CD4-positive, alpha-beta T cell (primary cell): ENCODE measurements at regions of chr16 and their contacts with region 1.

Region 1: GRCh38 chr16:67806428-67807147 is at the starts of genes RANBP10 and TSNAXIP1:
- DNase-seq: peak; percentile 90 to 99 (median 93)
- ATAC-seq: peak; percentile 92
- H3K4me3 ChIP-seq: peak within 1 kb of the TSS; percentile 97
- H3K4me3 Mint-ChIP-seq: peak within 1 kb of the TSS; percentile 91
- H3K27ac ChIP-seq: peak within 1 kb of the TSS; percentile 69 to 75
- H3K27ac Mint-ChIP-seq: peak within 1 kb of the TSS; percentile 76
- H3K4me1 ChIP-seq: peaks cover 50% of the 10 kb centered on the region
- H3K4me1 Mint-ChIP-seq: peaks cover 43% of the 10 kb centered on the region
- H3K27me3 ChIP-seq: no peaks in the 10 kb centered on the region
- H3K27me3 Mint-ChIP-seq: no peaks in the 10 kb centered on the region
- CTCF ChIP-seq: no peak
- total RNA-seq, gene RANBP10: 12.0 to 13.6 TPM
- total RNA-seq, gene TSNAXIP1: 0.52 to 0.61 TPM

Region 2: DNA sequence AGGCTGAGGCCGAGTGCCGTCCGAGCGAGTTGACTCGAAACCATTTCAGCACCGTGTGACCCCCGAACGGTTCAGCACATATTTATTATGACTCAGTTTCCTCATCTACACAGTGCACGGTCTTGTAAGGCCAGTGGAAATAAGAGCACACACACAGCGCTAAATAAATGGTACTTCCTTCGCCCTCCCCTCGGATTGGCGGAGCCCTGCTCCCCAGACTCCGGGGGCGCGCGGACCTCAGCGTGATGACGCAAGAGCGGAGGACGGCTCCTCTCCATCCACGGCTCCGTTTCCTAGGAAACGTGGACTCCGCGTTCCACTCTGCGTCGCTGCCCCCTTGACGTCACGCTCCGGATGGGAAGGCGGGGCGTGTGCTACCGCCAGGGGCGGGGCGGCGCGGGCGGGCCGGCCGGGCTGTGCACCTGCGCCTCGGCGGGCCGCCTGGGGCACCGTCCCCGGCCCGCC is 146.0 kb before region 1 on chr16 and contains the start of gene PARD6A:
- CTCF ChIA-PET with region 1: no interaction called
- POLR2A ChIA-PET with region 1: interaction called, 3 read pairs
- intact Hi-C with region 1: loop called in 1 of 2 experiments (anchors 5 kb)
- DNase-seq: peak; percentile 86 to 99 (median 93)
- ATAC-seq: peak; percentile 76
- H3K4me3 ChIP-seq: peak within 1 kb of the TSS; percentile 95
- H3K4me3 Mint-ChIP-seq: peak within 1 kb of the TSS; percentile 95
- H3K27ac ChIP-seq: peak within 1 kb of the TSS; percentile 93 to 99
- H3K27ac Mint-ChIP-seq: peak within 1 kb of the TSS; percentile 94
- H3K4me1 ChIP-seq: peaks cover 38% of the 10 kb centered on the region
- H3K4me1 Mint-ChIP-seq: peaks cover 37% of the 10 kb centered on the region
- H3K27me3 ChIP-seq: no peaks in the 10 kb centered on the region
- H3K27me3 Mint-ChIP-seq: no peaks in the 10 kb centered on the region
- CTCF ChIP-seq: no peak
- total RNA-seq, gene PARD6A: 4.5 to 4.7 TPM

Region 3: DNA sequence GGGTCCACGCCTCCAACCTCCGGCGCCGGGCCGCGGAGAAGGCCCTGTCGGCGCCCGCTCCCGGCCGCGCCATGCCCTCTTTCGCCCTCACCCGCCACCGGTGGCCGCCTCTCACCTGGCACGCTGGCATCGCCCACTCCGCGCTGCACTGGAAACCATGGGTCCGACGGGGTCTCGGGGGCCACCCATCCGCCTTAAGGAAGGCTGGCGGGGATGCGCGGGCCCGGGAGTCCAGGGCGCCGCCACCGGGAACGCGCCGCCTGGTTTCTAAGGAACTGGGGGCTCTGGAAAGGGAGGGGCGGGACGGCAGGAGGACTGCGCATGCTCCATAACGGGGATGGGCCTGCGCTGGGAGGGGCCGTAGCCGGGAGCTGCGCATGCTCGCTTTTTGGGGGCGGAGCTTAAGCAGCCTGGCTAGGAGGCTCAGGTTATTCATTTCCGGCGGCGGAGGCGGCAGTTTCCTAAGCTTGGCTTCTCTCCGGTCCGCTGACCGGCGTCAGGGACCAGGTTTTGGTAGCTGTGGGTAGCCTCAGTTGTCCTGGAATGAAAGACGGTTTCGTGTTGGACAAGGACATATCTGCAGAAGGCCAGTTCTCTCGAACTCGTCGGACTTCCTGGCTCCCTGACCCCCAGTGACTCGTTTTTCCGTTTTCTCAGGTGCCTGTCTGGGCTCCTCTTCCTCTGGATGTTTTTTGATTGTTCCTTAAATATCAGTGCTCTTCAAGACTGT is 87.4 kb before region 1 on chr16 and contains the start of gene GFOD2:
- CTCF ChIA-PET with region 1: no interaction called
- POLR2A ChIA-PET with region 1: interaction called, 18 read pairs
- intact Hi-C with region 1: loop called (anchors 1 to 2 kb)
- DNase-seq: peak; percentile 96 to 100 (median 98)
- ATAC-seq: peak; percentile 94
- H3K4me3 ChIP-seq: peak within 1 kb of the TSS; percentile 76
- H3K4me3 Mint-ChIP-seq: peak within 1 kb of the TSS; percentile 97
- H3K27ac ChIP-seq: peak within 1 kb of the TSS; percentile 81 to 93
- H3K27ac Mint-ChIP-seq: peak within 1 kb of the TSS; percentile 93
- H3K4me1 ChIP-seq: peaks cover 26% of the 10 kb centered on the region
- H3K4me1 Mint-ChIP-seq: peaks cover 42% of the 10 kb centered on the region
- H3K27me3 ChIP-seq: no peaks in the 10 kb centered on the region
- H3K27me3 Mint-ChIP-seq: no peaks in the 10 kb centered on the region
- CTCF ChIP-seq: no peak
- total RNA-seq, gene GFOD2: 2.8 to 3.7 TPM

Region 4: GRCh38 chr16:67833418-67834241 is 27.0 kb after region 1 on chr16:
- CTCF ChIA-PET with region 1: no interaction called
- POLR2A ChIA-PET with region 1: interaction called, 13 read pairs
- intact Hi-C with region 1: loop called in 1 of 2 experiments (anchors 2 kb)
- DNase-seq: peak; percentile 87 to 95 (median 91)
- ATAC-seq: peak; percentile 99
- H3K4me3 ChIP-seq: peak overlapping the region; percentile 87
- H3K4me3 Mint-ChIP-seq: peak overlapping the region; percentile 93
- H3K27ac ChIP-seq: peak overlapping the region in 1 of 2 donors; percentile 34
- H3K27ac Mint-ChIP-seq: peak overlapping the region; percentile 72
- H3K4me1 ChIP-seq: peaks cover 20% of the 10 kb centered on the region
- H3K4me1 Mint-ChIP-seq: peaks cover 20% of the 10 kb centered on the region
- H3K27me3 ChIP-seq: no peaks in the 10 kb centered on the region
- H3K27me3 Mint-ChIP-seq: no peaks in the 10 kb centered on the region
- CTCF ChIP-seq: no peak

Region 5: DNA sequence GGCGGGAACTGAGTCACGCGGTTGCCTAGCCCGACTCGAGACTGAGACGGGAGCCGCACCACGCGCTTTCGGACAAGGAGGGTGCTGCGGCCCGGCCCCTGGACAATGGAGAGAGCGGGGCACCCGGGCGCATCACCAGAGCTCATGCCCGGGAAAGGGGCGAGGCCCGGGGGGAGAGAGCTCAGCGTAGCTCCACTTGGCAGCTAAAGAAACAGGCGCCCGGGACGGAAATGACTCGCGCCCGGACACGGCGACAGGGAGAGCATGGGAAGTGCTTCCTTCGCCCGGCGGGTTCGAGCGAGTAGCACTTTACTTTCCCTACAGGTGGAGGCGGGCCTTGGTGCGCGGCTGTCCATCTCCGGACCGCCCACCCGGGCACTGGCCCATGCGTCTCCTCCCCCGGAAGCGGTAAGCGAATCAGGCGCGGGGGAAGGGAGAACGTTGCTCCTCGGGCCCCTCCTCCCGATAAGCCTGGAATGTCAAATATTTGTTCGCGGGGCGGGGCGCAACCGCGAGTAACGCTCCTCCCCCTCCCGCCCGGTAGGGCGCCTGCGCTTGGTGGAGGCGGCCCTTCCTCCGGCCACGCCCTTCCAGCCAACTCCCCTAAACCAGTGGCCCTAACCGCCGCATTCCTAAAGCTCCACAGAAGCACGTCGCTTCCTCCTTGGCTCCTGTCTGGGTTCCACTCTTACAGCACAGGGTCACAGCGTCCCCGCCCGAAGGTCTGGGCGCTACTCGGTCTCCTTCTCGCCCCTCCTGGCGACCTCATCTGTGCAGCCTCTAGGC is 430.8 kb after region 1 on chr16:
- CTCF ChIA-PET with region 1: no interaction called
- POLR2A ChIA-PET with region 1: interaction called, 4 read pairs
- intact Hi-C with region 1: loop called in 1 of 2 experiments (anchors 5 kb)
- DNase-seq: peak; percentile 75 to 96 (median 85)
- ATAC-seq: peak; percentile 78
- H3K4me3 ChIP-seq: peak overlapping the region; percentile 66
- H3K4me3 Mint-ChIP-seq: peak overlapping the region; percentile 95
- H3K27ac ChIP-seq: no peak overlapping the region
- H3K27ac Mint-ChIP-seq: peak overlapping the region; percentile 77
- H3K4me1 ChIP-seq: peaks cover 41% of the 10 kb centered on the region
- H3K4me1 Mint-ChIP-seq: peaks cover 35% of the 10 kb centered on the region
- H3K27me3 ChIP-seq: no peaks in the 10 kb centered on the region
- H3K27me3 Mint-ChIP-seq: no peaks in the 10 kb centered on the region
- CTCF ChIP-seq: no peak